MCF 10A (cell line): ENCODE measurements at regions of chr1 and their contacts with region 1.

Region 1: DNA sequence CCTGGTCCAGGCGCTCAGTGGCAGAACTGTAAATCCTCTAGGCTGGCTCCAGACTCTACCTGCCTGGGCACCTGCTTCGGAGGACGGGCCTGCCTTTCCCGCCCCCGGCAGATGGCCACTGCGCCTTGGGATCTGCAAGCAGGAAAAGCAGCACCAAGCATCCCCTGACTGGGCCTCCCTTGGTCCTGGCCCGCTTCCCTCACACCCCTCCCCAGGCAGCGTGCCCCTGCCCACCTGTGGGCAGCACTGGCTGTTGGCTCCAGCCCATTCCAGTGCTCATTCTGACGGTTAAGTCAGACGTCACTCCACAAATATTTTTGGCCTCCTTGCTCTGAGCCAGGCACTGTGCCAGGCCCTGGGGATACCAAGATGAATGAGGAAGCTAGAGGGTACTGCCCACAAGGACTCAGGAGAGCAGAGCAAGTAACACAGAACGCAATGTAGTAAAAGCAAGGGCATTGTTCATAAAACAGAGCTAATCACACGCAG is 22.0 kb upstream of the BLACAT1 start:
- DNase-seq: peak; percentile 100
- H3K4me3 Mint-ChIP-seq: no peak overlapping the region
- H3K27ac Mint-ChIP-seq: peak overlapping the region; percentile 33
- H3K4me1 Mint-ChIP-seq: peaks cover 15% of the 10 kb centered on the region
- H3K27me3 Mint-ChIP-seq: peaks cover 40% of the 10 kb centered on the region
- CTCF ChIP-seq: no peak

Region 2: DNA sequence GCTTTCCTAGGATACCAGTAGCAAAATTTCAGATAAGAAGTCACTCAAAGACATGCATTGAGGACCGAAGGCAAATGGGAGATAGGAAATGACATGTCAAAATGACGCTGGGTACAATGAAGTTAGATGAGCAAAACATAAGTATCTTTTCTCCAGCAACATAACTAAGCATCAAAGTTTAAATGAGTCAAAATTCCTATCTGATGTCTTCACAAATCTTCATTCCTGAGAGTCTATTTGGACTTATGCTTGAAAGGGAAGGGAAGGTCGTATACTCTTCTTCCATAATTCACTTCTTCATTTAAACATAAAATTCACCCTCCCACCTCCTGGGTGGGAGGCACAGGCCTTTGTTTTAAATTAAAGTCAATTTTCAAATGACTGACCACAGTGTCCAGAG is 389.5 kb before region 1 on chr1:
- CTCF ChIA-PET with region 1: no interaction called
- POLR2A ChIA-PET with region 1: no interaction called
- intact Hi-C with region 1: no loop called
- DNase-seq: no peak
- H3K4me3 Mint-ChIP-seq: no peak overlapping the region
- H3K27ac Mint-ChIP-seq: no peak overlapping the region
- H3K4me1 Mint-ChIP-seq: peaks cover 15% of the 10 kb centered on the region
- H3K27me3 Mint-ChIP-seq: no peaks in the 10 kb centered on the region
- CTCF ChIP-seq: no peak

Region 3: GRCh38 chr1:205422993-205423625 is 54.7 kb before region 1 on chr1:
- CTCF ChIA-PET with region 1: interaction called, 296 read pairs
- POLR2A ChIA-PET with region 1: interaction called, 7 read pairs
- intact Hi-C with region 1: no loop called
- DNase-seq: no peak
- H3K4me3 Mint-ChIP-seq: no peak overlapping the region
- H3K27ac Mint-ChIP-seq: no peak overlapping the region
- H3K4me1 Mint-ChIP-seq: no peaks in the 10 kb centered on the region
- H3K27me3 Mint-ChIP-seq: peaks cover 67% of the 10 kb centered on the region
- CTCF ChIP-seq: peak; percentile 49

Region 4: DNA sequence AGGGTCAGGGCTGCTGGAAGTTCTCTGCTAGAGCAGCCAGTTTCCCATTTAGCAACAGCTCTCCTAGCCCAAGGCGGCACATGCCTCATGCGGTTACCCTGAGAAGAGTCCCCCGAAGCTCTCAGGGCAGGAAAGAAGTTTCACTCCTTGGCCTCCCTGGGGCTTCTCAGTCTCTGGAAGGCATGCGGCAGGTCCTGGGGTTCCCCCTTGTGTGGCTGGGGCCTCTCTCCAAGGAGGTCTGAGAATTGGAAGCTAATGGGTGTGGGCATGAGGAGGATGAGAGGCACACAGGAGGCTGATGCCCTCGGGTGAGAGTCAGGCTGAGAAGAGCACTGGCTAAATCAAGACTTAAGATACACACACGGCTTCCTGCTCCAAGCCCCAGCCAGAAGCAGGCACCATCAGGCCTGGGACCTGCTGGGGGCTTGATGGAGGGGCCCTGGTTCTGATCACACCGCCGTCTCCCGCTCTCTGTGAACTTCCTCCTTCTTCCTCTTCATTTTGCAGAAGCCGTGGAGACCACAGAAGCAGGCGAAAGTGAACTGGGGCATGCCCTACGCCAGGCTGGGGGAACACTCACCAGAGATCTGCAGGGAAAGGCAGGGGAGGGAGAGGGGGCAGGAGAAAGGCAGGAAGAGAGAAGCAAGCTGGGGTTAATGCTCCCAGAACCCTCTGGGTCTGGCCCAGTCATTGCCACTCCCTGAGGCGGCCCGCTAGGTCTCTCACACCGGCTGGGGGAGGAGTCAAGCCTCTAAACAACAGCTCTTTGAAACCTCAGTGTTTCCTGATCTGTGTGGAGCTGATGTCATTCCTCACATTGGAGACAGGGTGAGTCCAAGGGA is 37.1 kb before region 1 on chr1:
- CTCF ChIA-PET with region 1: interaction called, 10 read pairs
- POLR2A ChIA-PET with region 1: interaction called, 14 read pairs
- intact Hi-C with region 1: loop called (anchors 1 kb)
- DNase-seq: peak; percentile 93
- H3K4me3 Mint-ChIP-seq: peak overlapping the region; percentile 1
- H3K27ac Mint-ChIP-seq: peak overlapping the region; percentile 77
- H3K4me1 Mint-ChIP-seq: peaks cover 25% of the 10 kb centered on the region
- H3K27me3 Mint-ChIP-seq: no peaks in the 10 kb centered on the region
- CTCF ChIP-seq: no peak

Region 5: GRCh38 chr1:205449750-205450443 is 27.9 kb before region 1 on chr1:
- CTCF ChIA-PET with region 1: interaction called, 10 read pairs
- POLR2A ChIA-PET with region 1: interaction called, 11 read pairs
- intact Hi-C with region 1: no loop called
- DNase-seq: peak; percentile 93
- H3K4me3 Mint-ChIP-seq: peak overlapping the region; percentile 89
- H3K27ac Mint-ChIP-seq: peak overlapping the region; percentile 98
- H3K4me1 Mint-ChIP-seq: peaks cover 36% of the 10 kb centered on the region
- H3K27me3 Mint-ChIP-seq: peaks cover 40% of the 10 kb centered on the region
- CTCF ChIP-seq: peak; percentile 25